ENCODE measurements at regions of chr5 and their contacts with region 1.

Region 1: GRCh38 chr5:138213161-138214029 is at the start of gene CDC23:
- DNase-seq: peak; percentile 96
- H3K4me3 ChIP-seq: peak within 1 kb of the TSS; percentile 86 to 95
- H3K27ac ChIP-seq: peak within 1 kb of the TSS; percentile 74 to 75
- H3K4me1 ChIP-seq: peaks cover 7% of the 10 kb centered on the region
- H3K27me3 ChIP-seq: no peaks in the 10 kb centered on the region
- CTCF ChIP-seq: peak in 1 of 4 experiments; percentile 10
- POLR2A ChIP-seq: peak; percentile 63
- total RNA-seq, gene CDC23: 14.7 to 23.9 TPM

Region 2: GRCh38 chr5:138331449-138332368 is 118.3 kb after region 1 on chr5 and contains the start of gene CDC25C:
- intact Hi-C with region 1: loop called (anchors 10 kb)
- DNase-seq: peak; percentile 98
- H3K4me3 ChIP-seq: peak within 1 kb of the TSS; percentile 19 to 39
- H3K27ac ChIP-seq: peak within 1 kb of the TSS; percentile 14 to 56
- H3K4me1 ChIP-seq: no peaks in the 10 kb centered on the region
- H3K27me3 ChIP-seq: no peaks in the 10 kb centered on the region
- CTCF ChIP-seq: peak in 1 of 4 experiments; percentile 3
- POLR2A ChIP-seq: peak; percentile 7
- total RNA-seq, gene CDC25C: 0.14 to 3.2 TPM

Measured in prostate gland (tissue), 2 donors.